B cell (primary cell): ENCODE measurements at regions of chr7 and their contacts with region 1.

Region 1: DNA sequence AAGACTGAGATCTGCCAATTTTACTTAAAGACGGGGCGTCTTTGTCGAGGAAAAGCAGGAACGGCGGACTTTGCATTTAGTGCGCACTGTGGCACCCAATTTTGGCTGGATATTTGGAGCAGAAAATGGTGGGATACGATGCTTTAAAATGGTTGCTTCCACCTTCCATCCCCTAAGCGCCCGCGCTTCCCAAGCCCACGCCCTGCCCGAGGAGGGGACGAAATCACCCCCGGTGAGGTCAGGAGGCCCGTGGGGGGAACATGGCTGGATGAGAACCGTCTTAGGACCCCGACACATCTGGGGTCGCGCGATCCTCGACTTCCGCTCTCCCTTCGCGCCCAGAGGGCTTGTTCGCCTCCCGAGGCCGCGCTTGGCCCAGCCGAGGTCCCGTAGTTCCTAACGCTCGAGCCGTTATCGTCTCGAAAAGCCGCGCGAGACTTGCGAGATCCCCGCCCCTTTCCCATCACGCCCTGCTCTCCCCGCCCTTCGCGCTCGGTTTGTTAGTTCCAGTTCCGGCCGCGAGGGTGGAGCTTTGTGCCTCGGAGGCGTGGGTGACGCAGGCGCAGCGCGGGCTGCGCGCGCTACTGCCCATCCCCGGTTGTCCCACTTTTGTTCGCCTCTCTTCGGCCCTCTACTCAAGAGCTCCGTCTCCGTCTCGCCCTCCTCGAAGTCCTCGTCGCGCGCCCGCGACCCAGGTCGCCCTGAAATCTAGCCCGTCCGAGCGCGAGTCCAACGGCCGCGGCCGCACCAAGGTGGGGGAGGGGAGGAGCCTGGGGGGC is at the start of gene SRRT:
- DNase-seq: peak; percentile 99
- ATAC-seq: peak; percentile 96
- H3K4me3 ChIP-seq: peak within 1 kb of the TSS; percentile 73 to 99 (median 89)
- H3K4me3 Mint-ChIP-seq: peak within 1 kb of the TSS; percentile 97
- H3K27ac ChIP-seq: peak within 1 kb of the TSS; percentile 91 to 96
- H3K27ac Mint-ChIP-seq: peak within 1 kb of the TSS; percentile 95
- H3K4me1 ChIP-seq: peaks cover 22 to 32% of the 10 kb centered on the region in 2 donors
- H3K4me1 Mint-ChIP-seq: peaks cover 37% of the 10 kb centered on the region
- H3K27me3 ChIP-seq: no peaks in the 10 kb centered on the region
- H3K27me3 Mint-ChIP-seq: no peaks in the 10 kb centered on the region
- CTCF ChIP-seq: no peak
- total RNA-seq, gene SRRT: 209 and 224 TPM in 2 replicates

Region 2: GRCh38 chr7:100889761-100890634 is 15.2 kb after region 1 on chr7:
- CTCF ChIA-PET with region 1: interaction called, 17 read pairs
- POLR2A ChIA-PET with region 1: interaction called, 84 read pairs
- intact Hi-C with region 1: loop called (anchors 1 kb)
- DNase-seq: peak; percentile 94
- ATAC-seq: peak; percentile 82
- H3K4me3 ChIP-seq: peak overlapping the region in 4 of 5 experiments; percentile 57 to 80 (median 72)
- H3K4me3 Mint-ChIP-seq: peak overlapping the region; percentile 87
- H3K27ac ChIP-seq: no peak overlapping the region
- H3K27ac Mint-ChIP-seq: peak overlapping the region; percentile 82
- H3K4me1 ChIP-seq: peaks cover 43 to 54% of the 10 kb centered on the region in 2 donors
- H3K4me1 Mint-ChIP-seq: peaks cover 48% of the 10 kb centered on the region
- H3K27me3 ChIP-seq: peaks cover 0 to 46% (median 12%) of the 10 kb centered on the region in 4 experiments
- H3K27me3 Mint-ChIP-seq: peaks cover 22% of the 10 kb centered on the region
- CTCF ChIP-seq: no peak